ENCODE measurements at regions of chr20 and their contacts with region 1.

Region 1: DNA sequence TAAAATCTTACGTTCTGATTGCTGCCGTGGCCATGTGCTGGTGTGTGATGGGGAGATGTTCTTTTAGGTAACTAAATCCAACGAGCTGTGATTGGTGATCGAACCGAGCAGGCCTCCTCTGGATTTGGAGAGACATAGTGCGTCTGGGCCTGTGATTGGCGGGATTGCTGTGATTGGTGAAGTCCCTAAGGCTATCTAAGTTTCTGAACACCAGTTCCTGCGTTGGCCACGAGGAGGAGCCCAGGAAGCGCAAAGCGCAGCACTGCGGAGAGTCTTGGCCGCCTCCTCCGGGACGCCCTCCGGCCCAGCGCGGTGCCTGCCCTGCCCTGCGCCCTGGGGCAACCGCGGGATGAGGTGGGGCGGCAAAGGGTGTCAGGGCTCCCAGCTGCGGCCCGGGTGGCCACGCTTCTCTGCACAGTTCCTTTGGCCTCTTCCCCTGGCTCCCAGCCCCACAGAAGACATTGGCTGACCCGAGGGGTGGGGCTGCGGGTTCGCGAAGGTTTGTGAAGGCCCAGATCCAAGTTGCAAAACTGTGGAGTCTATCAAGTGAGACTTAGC is 33.0 kb downstream of the HNF4A start:
- DNase-seq: peak; percentile 63
- H3K4me3 ChIP-seq: no peak overlapping the region
- H3K27ac ChIP-seq: no peak overlapping the region
- H3K4me1 ChIP-seq: no peaks in the 10 kb centered on the region
- H3K27me3 ChIP-seq: peaks cover 1 to 2% of the 10 kb centered on the region in 2 experiments
- CTCF ChIP-seq: peak; percentile 76 to 81
- POLR2A ChIP-seq: no peak

Region 2: GRCh38 chr20:44180814-44181213 is 207.7 kb before region 1 on chr20:
- CTCF ChIA-PET with region 1: no interaction called
- POLR2A ChIA-PET with region 1: no interaction called
- dilution Hi-C with region 1: no loop called
- intact Hi-C with region 1: no loop called
- DNase-seq: no peak
- H3K4me3 ChIP-seq: no peak overlapping the region
- H3K27ac ChIP-seq: no peak overlapping the region
- H3K4me1 ChIP-seq: no peaks in the 10 kb centered on the region
- H3K27me3 ChIP-seq: peaks cover 6 to 27% of the 10 kb centered on the region in 2 experiments
- CTCF ChIP-seq: no peak
- POLR2A ChIP-seq: no peak

Region 3: GRCh38 chr20:44196271-44196670 is 192.3 kb before region 1 on chr20:
- CTCF ChIA-PET with region 1: no interaction called
- POLR2A ChIA-PET with region 1: no interaction called
- dilution Hi-C with region 1: no loop called
- intact Hi-C with region 1: no loop called
- DNase-seq: no peak
- H3K4me3 ChIP-seq: no peak overlapping the region
- H3K27ac ChIP-seq: no peak overlapping the region
- H3K4me1 ChIP-seq: no peaks in the 10 kb centered on the region
- H3K27me3 ChIP-seq: peaks cover 0 to 2% of the 10 kb centered on the region in 2 experiments
- CTCF ChIP-seq: no peak
- POLR2A ChIP-seq: no peak

Region 4: GRCh38 chr20:44217342-44218092 is 171.0 kb before region 1 on chr20:
- CTCF ChIA-PET with region 1: interaction called, 53 read pairs
- POLR2A ChIA-PET with region 1: no interaction called
- dilution Hi-C with region 1: no loop called
- intact Hi-C with region 1: loop called (anchors 1 kb)
- DNase-seq: peak; percentile 55
- H3K4me3 ChIP-seq: no peak overlapping the region
- H3K27ac ChIP-seq: no peak overlapping the region
- H3K4me1 ChIP-seq: no peaks in the 10 kb centered on the region
- H3K27me3 ChIP-seq: no peaks in the 10 kb centered on the region
- CTCF ChIP-seq: peak; percentile 80 to 91
- POLR2A ChIP-seq: no peak

Region 5: DNA sequence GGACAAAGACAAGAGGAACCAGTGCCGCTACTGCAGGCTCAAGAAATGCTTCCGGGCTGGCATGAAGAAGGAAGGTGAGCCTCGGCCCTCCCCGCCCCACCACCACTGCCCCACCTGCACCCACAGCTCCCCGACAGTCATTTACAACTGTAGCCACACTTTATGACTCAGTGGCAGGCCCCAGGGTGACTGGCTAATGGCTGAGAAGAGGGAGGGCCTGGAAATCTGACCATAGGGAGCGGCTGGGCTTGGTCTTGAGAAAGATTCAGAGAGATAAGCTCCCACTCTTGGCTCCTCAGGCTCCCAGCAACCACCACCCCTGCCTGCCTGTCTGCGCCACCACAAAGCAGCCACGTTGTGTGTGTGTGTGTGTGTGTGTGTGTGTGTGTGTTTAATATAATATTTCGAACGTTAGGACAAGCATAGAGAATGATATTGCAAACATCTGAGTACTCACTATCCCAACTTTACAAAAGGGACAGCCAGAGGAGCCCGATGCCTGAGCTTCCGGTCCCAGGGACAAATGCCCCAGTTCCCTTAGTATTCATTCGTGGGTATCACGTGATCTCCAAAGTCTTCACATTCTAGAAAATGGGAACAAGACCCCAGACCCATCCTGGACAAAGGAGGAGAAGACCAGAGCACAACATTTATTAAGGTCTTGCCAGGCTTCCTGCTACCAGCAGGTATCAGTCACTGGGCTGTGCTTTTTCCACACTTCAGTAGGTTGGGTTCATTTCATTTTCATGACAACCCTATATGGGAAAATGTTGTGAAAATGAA is 19.0 kb after region 1 on chr20:
- CTCF ChIA-PET with region 1: interaction called, 10 read pairs
- POLR2A ChIA-PET with region 1: no interaction called
- dilution Hi-C with region 1: no loop called
- intact Hi-C with region 1: no loop called
- DNase-seq: no peak
- H3K4me3 ChIP-seq: no peak overlapping the region
- H3K27ac ChIP-seq: no peak overlapping the region
- H3K4me1 ChIP-seq: no peaks in the 10 kb centered on the region
- H3K27me3 ChIP-seq: no peaks in the 10 kb centered on the region
- CTCF ChIP-seq: no peak
- POLR2A ChIP-seq: no peak

Region 6: DNA sequence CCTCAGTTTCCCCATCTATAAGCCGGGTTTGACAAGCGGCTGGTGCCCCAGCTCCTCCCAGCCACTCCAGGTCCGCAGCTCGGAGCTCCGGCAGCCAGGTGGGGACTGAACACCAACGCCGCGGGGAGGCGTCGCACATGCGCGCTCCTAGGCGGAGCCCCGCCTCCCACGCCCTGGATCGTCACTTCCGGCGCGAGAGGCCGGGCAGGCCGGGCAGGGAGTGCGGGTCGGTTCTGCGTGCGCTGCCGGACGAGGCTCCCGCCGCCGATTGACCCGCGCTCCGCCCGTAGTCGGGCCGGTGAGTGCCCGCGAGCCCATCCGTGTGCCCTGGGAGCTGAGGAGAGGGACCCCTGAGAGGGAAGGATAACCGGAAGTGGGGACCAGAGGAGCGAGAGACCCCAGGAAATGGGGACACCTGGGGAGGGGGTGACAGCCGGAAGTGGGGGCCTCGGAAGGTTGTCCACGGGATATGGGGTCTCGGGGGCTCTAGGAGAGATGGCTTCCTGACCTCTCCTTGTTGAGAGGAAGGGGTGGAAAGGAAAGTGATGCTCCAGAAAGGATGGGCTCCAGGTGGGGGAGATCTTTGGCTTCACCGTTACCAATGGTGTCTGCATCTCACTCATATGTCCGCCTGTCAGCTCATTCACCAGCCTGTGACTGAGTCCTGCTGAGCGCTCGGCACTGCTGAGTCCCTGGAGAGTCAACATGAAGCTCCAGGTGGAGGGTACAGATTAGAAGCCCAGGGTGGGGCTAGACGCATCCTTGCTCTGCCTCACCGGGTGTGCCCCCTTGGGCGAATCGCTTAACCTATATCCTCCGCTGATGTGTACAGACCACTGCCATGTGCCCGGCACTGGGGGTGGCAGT is 87.4 kb after region 1 on chr20 and contains the start of gene TTPAL:
- CTCF ChIA-PET with region 1: interaction called, 14 read pairs
- POLR2A ChIA-PET with region 1: no interaction called
- dilution Hi-C with region 1: no loop called
- intact Hi-C with region 1: no loop called
- DNase-seq: peak; percentile 83
- H3K4me3 ChIP-seq: peak within 1 kb of the TSS; percentile 42 to 68 (median 52)
- H3K27ac ChIP-seq: peak within 1 kb of the TSS; percentile 56
- H3K4me1 ChIP-seq: peaks cover 13% of the 10 kb centered on the region
- H3K27me3 ChIP-seq: peaks cover 0 to 4% of the 10 kb centered on the region in 2 experiments
- CTCF ChIP-seq: peak; percentile 4 to 28
- POLR2A ChIP-seq: peak; percentile 91
- total RNA-seq, gene TTPAL: 8.0 and 8.7 TPM in 2 replicates

Region 7: GRCh38 chr20:44733341-44734069 is 345.0 kb after region 1 on chr20:
- CTCF ChIA-PET with region 1: interaction called, 5 read pairs
- POLR2A ChIA-PET with region 1: no interaction called
- dilution Hi-C with region 1: no loop called
- intact Hi-C with region 1: loop called (anchors 5 kb)
- DNase-seq: peak; percentile 74
- H3K4me3 ChIP-seq: no peak overlapping the region
- H3K27ac ChIP-seq: no peak overlapping the region
- H3K4me1 ChIP-seq: peaks cover 12% of the 10 kb centered on the region
- H3K27me3 ChIP-seq: no peaks in the 10 kb centered on the region
- CTCF ChIP-seq: peak; percentile 84 to 92
- POLR2A ChIP-seq: no peak

Region 8: DNA sequence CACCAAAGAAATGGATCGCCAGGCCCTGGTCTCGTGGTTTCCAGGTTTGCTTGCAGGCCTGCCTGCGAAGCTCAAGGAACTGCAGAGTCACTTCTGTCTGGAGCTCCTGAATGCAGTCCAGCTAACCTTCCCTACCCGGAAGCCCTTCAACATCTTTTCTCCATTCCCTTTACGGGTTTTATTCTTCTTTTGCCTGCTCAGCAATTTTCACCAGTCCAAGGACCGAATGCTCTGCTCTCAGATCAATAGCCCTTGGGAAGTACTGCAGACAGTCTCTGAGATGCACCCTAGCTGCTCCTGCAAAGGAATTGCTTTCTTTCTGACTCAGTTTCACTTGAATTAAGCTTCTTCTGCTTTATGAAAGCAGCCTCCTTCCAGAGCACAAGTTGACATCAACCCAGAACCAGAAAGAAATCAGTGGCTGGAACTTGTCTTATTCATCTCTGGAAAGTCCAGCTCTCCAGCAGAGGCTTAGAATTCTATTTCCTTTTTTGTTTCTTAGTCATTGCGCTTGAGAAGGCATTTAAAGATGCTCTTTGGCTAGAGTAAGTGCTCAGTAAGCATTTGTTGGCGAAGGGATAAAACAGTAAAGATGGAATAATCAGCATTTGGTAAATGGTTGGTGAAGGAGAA is 478.3 kb after region 1 on chr20:
- CTCF ChIA-PET with region 1: interaction called, 7 read pairs
- POLR2A ChIA-PET with region 1: no interaction called
- dilution Hi-C with region 1: no loop called
- intact Hi-C with region 1: loop called (anchors 5 kb)
- DNase-seq: no peak
- H3K4me3 ChIP-seq: no peak overlapping the region
- H3K27ac ChIP-seq: no peak overlapping the region
- H3K4me1 ChIP-seq: no peaks in the 10 kb centered on the region
- H3K27me3 ChIP-seq: peaks cover 8 to 14% of the 10 kb centered on the region in 2 experiments
- CTCF ChIP-seq: no peak
- POLR2A ChIP-seq: no peak